HCT116 (cell line): ENCODE measurements at regions of chr10 and their contacts with region 1.

Region 1: DNA sequence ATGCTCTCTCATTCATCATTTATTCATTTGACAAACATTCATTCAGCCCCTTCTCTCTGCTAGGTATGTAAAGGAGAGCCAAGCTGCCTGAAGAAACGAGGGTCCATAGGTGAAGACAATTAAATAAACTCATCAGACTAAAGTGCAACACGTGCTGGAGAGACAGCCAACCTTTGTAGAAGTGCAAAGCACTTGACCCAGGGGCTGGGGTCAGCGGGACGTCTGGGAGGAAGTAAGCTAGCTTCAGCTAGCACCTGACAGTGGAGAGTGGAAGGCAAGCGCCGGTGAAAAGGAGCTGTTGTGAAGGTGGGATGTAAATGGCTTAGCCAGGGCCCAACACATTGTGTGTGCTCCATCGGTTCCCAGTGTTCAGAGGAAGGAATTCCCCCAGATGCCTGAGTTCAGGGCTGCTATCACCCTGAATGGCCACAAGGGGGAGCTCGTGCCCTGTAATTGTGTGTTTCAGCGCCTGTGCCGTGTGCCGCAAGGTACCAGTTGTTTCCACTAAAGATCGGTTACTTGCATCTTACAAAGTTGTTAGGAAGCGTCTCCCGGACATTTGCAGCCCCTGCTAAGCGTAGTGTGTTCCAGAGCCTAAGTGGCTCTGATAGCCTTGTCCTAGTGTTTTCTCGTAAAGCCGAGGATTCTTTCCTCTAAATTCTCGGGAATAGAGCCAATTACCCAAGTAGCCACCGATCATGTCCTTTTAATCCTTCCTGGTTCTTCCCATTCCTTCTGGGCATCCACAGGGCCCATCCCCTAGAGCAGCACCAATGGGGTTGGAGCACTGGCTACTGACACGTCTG is 30.6 kb downstream of the TLX1 start:
- DNase-seq: peak; percentile 72
- ATAC-seq: peak; percentile 95
- H3K4me3 ChIP-seq: peak overlapping the region; percentile 38 to 47
- H3K27ac ChIP-seq: no peak overlapping the region
- H3K4me1 ChIP-seq: peaks cover 4 to 15% of the 10 kb centered on the region in 2 experiments; a peak in 3 of 4 replicates
- H3K27me3 ChIP-seq: no peaks in the 10 kb centered on the region
- CTCF ChIP-seq: peak; percentile 95 to 100 (median 99)
- POLR2A ChIP-seq: no peak
- RAD21 ChIP-seq: peak; percentile 99

Region 2: GRCh38 chr10:101172741-101173140 is 11.0 kb after region 1 on chr10:
- CTCF ChIA-PET with region 1: interaction called, 10 read pairs
- POLR2A ChIA-PET with region 1: no interaction called
- RAD21 ChIA-PET with region 1: no interaction called
- intact Hi-C with region 1: no loop called
- DNase-seq: no peak
- ATAC-seq: no peak
- H3K4me3 ChIP-seq: no peak overlapping the region
- H3K27ac ChIP-seq: no peak overlapping the region
- H3K4me1 ChIP-seq: no peaks in the 10 kb centered on the region
- H3K27me3 ChIP-seq: no peaks in the 10 kb centered on the region
- CTCF ChIP-seq: no peak
- POLR2A ChIP-seq: no peak
- RAD21 ChIP-seq: no peak

Region 3: GRCh38 chr10:101297901-101298486 is 136.3 kb after region 1 on chr10:
- CTCF ChIA-PET with region 1: no interaction called
- POLR2A ChIA-PET with region 1: no interaction called
- RAD21 ChIA-PET with region 1: no interaction called
- intact Hi-C with region 1: loop called (anchors 5 kb)
- DNase-seq: peak; percentile 64
- ATAC-seq: peak; percentile 94
- H3K4me3 ChIP-seq: no peak overlapping the region
- H3K27ac ChIP-seq: no peak overlapping the region
- H3K4me1 ChIP-seq: peaks cover 0 to 5% of the 10 kb centered on the region in 2 experiments; a peak in 3 of 4 replicates
- H3K27me3 ChIP-seq: no peaks in the 10 kb centered on the region
- CTCF ChIP-seq: peak; percentile 86 to 97 (median 97)
- POLR2A ChIP-seq: no peak
- RAD21 ChIP-seq: peak; percentile 63